GM10248 (cell line): ENCODE measurements at regions of chr11 and their contacts with region 1.

Region 1: DNA sequence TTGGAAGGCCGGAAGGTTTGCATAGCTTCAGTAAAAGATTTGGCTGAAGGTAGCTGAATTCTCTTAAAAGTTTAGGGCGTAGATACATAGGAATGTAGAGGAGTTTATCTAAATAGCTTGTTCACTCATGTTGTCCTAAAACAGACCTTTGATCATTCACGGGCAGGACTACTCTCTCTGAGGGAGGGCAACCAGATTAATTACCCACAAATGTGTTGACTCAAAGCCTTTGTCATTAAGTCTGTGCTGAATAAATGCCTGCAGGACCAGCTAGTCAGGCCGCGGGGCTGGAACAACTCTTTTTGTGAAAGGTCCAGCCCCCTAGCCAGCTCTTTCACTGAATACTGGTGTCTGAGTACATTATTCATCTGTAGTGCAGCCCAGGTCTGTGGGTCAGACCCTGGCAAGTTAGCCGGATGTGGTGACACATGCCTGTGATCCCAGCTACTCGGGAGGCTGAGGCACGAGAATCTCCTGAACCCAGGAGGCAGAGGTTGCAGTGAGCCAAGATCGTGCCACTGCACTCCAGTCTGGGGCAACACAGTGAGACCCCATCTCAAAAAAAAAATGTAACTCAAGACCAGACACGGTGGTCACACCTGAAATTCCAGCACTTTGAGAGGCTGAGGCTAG is 2.8 kb upstream of the FADD start:
- DNase-seq: no peak
- CTCF ChIP-seq: no peak

Region 2: DNA sequence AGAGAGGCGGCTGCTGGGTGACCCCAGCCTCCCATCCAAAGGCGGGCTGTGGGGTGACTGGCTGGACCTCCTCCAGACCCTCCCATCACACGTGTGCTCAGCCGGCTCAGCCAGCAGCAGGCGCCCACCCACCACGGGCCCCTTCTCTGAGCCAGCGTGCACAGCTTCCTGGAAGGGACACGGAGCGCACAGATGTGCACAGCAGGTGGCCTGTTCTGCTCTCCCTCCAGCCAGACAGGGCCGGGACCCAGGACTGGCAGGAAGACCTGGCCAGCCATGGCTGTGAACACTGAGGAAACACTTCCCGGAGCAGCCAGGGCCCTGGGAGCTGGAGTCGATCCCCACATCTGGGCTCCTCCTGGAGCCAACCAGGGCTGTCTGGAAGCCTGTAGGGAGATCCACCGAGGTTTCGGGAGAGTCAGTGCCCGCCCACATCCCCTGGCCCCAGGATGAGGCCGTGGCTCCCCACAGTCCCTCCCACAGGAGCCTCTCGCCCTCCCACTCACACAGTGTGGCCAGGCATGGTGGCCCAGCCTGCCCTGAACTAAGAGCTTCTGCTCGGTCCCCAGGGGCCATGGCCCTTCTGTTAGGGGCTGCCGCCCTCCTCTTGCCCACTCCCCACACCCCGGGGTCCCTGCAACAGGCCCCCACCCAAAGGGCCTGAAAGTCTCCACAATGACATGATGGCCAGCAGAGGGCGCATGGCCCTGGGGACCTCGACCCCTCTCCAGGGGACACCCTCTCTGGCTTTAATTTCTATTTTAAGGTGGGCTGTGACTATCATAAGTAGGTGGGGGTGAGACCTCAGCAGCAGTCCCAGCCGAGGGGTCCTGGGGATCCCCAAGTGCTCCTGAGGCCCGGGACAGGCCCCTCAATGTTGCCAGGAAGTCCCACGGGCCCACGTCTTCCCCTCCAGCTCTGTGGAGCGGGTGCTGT is 290.5 kb before region 1 on chr11:
- CTCF ChIA-PET with region 1: interaction called, 27 read pairs
- POLR2A ChIA-PET with region 1: no interaction called
- DNase-seq: peak; percentile 51
- CTCF ChIP-seq: peak; percentile 66

Region 3: GRCh38 chr11:69918938-69919650 is 281.2 kb before region 1 on chr11:
- CTCF ChIA-PET with region 1: interaction called, 12 read pairs
- POLR2A ChIA-PET with region 1: no interaction called
- DNase-seq: peak; percentile 81
- CTCF ChIP-seq: peak; percentile 84

Region 4: GRCh38 chr11:70176940-70177689 is 23.2 kb before region 1 on chr11:
- CTCF ChIA-PET with region 1: interaction called, 12 read pairs
- POLR2A ChIA-PET with region 1: no interaction called
- DNase-seq: peak; percentile 80
- CTCF ChIP-seq: peak; percentile 40

Region 5: DNA sequence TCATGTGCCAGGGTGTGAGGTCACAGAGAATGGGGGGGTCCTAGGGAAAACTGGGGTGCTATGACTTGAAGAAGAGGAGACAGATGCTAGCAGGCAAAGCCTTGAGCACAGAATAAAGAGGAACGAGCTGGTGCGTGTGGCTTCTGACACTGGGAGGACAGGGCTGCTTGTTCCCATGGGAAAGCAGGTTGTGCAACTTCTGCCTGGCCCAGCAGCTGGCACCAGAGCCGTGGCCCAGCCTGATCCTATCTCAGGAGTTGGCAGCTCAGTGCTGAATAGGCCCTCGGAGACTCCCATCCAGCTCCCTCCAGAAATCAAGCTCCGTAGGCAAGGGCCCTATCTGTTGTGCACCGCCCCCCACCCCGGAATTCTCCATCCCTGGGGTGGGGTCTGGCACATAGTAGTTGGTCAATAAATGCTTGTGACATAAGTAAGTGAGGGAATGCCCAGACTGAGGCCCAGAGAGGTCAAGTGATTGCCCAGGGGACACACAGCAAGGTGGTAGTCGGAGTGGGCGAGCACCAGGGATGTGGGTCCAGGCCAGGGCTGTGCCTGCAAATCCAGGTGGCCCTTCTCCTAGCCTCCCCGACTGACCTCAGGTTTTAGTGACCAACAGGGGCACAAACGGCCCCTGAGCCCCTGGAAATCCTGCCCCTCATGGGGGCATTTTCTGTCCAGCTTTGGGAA is 16.7 kb before region 1 on chr11:
- CTCF ChIA-PET with region 1: interaction called, 16 read pairs
- POLR2A ChIA-PET with region 1: no interaction called
- DNase-seq: no peak
- CTCF ChIP-seq: no peak